ENCODE measurements at regions of chr2 and their contacts with region 1.

Region 1: GRCh38 chr2:192194866-192195547 is at the start of gene TMEFF2:
- DNase-seq: peak; percentile 43
- ATAC-seq: peak; percentile 67
- H3K4me3 ChIP-seq: peak within 1 kb of the TSS; percentile 64
- H3K27ac ChIP-seq: no peak within 1 kb of the TSS
- H3K4me1 ChIP-seq: peaks cover 3% of the 10 kb centered on the region; the same call in 1 of the 2 replicates
- H3K27me3 ChIP-seq: peaks cover 76% of the 10 kb centered on the region
- CTCF ChIP-seq: peak; percentile 46; the same call in 1 of the 2 replicates
- total RNA-seq, gene TMEFF2: not detected in 2 replicates

Region 2: DNA sequence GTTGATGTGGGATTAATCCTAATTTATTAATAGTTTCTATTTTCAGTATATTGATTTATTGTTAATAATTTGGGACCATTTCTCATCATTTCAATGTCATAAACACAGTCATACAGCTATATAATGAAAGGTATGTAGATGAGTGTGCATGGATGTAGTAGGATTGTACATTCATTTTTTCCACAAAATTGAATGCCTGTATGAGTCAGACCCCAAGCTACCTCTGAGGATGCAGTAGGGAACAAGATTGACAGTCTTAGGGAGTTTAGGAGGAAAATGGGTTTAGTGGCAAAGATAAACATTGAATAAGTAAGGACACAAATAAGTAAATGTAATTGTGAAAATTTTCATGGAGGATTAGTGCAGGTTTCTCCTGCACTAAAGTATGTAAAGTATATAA is 13.8 kb after region 1 on chr2:
- CTCF ChIA-PET with region 1: no interaction called
- POLR2A ChIA-PET with region 1: no interaction called
- intact Hi-C with region 1: no loop called
- DNase-seq: no peak
- ATAC-seq: no peak
- H3K4me3 ChIP-seq: no peak overlapping the region
- H3K27ac ChIP-seq: no peak overlapping the region
- H3K4me1 ChIP-seq: no peaks in the 10 kb centered on the region
- H3K27me3 ChIP-seq: no peaks in the 10 kb centered on the region
- CTCF ChIP-seq: no peak

Region 3: GRCh38 chr2:192267484-192267883 is 72.5 kb after region 1 on chr2:
- CTCF ChIA-PET with region 1: no interaction called
- POLR2A ChIA-PET with region 1: no interaction called
- intact Hi-C with region 1: loop called (anchors 5 kb)
- DNase-seq: peak; percentile 87
- ATAC-seq: peak; percentile 95
- H3K4me3 ChIP-seq: no peak overlapping the region
- H3K27ac ChIP-seq: peak overlapping the region; percentile 26
- H3K4me1 ChIP-seq: peaks cover 14% of the 10 kb centered on the region
- H3K27me3 ChIP-seq: no peaks in the 10 kb centered on the region
- CTCF ChIP-seq: no peak

Region 4: DNA sequence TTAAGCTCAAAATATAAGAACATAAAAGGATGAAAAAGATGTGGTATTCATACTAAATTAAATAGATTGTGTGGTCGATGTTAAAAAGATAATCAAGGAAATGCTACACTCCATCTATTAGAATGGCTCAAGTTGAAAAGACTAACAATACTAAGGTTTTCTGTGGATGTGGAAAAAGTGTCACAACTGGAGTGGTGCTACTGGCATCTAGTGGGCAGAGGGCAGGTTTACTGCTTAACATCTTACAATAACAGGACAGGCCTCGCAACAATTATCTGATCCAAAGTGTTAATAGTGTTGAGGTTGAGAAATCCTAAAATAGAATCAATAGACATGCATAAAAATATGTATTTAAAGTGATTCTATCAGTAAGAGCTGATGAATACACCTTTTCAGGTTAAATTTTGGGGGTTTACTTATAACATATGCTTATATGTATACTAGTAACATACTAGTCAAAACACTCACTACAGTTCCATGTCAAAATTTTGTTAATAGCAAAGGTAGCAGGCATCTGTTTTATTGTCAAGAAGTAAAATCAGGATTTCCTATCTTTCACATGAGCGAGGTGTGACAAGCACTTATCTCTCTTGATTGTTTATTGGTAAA is 91.2 kb after region 1 on chr2:
- CTCF ChIA-PET with region 1: no interaction called
- POLR2A ChIA-PET with region 1: no interaction called
- intact Hi-C with region 1: loop called (anchors 1 kb)
- DNase-seq: peak; percentile 66
- ATAC-seq: peak; percentile 81
- H3K4me3 ChIP-seq: no peak overlapping the region
- H3K27ac ChIP-seq: no peak overlapping the region
- H3K4me1 ChIP-seq: no peaks in the 10 kb centered on the region
- H3K27me3 ChIP-seq: 0 out of 2 replicates have a peak, but pooled peaks cover 3% of the 10 kb centered on the region
- CTCF ChIP-seq: peak; percentile 77

Region 5: DNA sequence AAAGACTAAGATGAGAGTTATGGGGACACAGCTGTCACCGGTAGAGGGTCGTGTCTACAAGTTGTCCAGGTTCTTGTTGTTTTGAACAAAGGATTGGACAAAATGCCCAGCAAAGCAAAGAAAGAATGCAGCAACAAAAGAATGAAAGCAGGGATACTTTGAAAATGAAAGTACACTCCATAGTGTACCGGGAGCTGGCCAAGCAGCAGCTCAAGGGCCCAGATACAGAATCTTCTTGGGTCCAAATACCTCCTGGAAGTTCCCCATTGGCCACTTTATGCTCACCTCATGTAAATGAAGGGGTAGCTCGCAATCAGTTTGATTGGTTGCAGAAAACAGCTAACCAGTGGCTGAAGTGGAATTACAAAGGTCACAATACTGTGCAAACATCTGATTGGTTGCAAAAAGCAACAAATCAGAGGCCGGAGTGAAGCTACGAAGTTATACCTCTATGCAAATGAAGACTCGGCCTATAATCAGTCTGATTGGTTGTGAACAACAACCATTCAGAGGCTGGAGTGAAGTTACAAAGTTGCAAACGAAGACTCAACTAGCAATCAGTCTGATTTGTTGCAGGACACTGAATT is 474.6 kb after region 1 on chr2:
- CTCF ChIA-PET with region 1: no interaction called
- POLR2A ChIA-PET with region 1: no interaction called
- intact Hi-C with region 1: loop called (anchors 10 kb)
- DNase-seq: no peak
- ATAC-seq: no peak
- H3K4me3 ChIP-seq: peak overlapping the region; percentile 24; the same call in 1 of the 2 replicates
- H3K27ac ChIP-seq: no peak overlapping the region
- H3K4me1 ChIP-seq: no peaks in the 10 kb centered on the region
- H3K27me3 ChIP-seq: no peaks in the 10 kb centered on the region
- CTCF ChIP-seq: no peak

Region 6: GRCh38 chr2:192719629-192720028 is 524.6 kb after region 1 on chr2:
- CTCF ChIA-PET with region 1: no interaction called
- POLR2A ChIA-PET with region 1: no interaction called
- intact Hi-C with region 1: loop called (anchors 10 kb)
- DNase-seq: no peak
- ATAC-seq: no peak
- H3K4me3 ChIP-seq: no peak overlapping the region
- H3K27ac ChIP-seq: no peak overlapping the region
- H3K4me1 ChIP-seq: no peaks in the 10 kb centered on the region
- H3K27me3 ChIP-seq: no peaks in the 10 kb centered on the region
- CTCF ChIP-seq: no peak

Region 7: GRCh38 chr2:192741889-192742288 is 546.9 kb after region 1 on chr2:
- CTCF ChIA-PET with region 1: no interaction called
- POLR2A ChIA-PET with region 1: no interaction called
- intact Hi-C with region 1: loop called (anchors 2 kb)
- DNase-seq: peak; percentile 30
- ATAC-seq: peak; percentile 24; the same call in 1 of the 2 replicates
- H3K4me3 ChIP-seq: no peak overlapping the region
- H3K27ac ChIP-seq: no peak overlapping the region
- H3K4me1 ChIP-seq: no peaks in the 10 kb centered on the region
- H3K27me3 ChIP-seq: no peaks in the 10 kb centered on the region
- CTCF ChIP-seq: peak; percentile 59